ENCODE measurements at regions of chr2 and their contacts with region 1.

Region 1: DNA sequence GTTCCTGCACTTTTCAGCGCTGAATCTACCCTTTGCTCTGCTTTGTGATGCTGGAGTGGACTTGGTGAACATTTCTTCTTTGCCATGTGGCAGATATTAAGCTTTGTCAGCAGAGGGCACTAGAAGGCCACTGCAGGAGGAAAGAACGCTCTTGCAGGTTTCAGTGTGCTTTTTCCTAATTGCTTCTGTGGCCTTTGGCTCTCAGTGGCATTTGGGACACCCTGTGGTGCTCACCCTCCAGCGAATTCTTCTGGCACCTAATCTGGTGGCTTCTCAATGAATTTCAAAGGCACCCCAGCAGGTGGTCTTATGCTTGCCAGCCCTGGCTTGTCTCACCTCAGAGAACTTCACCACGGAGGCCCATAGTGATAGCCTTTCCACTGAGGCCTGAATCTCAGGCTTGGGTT is 146.7 kb downstream of the MYO3B start:
- DNase-seq: peak; percentile 42
- ATAC-seq: peak; percentile 80
- H3K4me3 ChIP-seq: no peak overlapping the region
- H3K27ac ChIP-seq: no peak overlapping the region
- H3K4me1 ChIP-seq: no peaks in the 10 kb centered on the region
- H3K27me3 ChIP-seq: no peaks in the 10 kb centered on the region
- CTCF ChIP-seq: peak; percentile 80 to 84 (median 84)
- POLR2A ChIP-seq: no peak
- RAD21 ChIP-seq: peak; percentile 87

Region 2: GRCh38 chr2:170361090-170361936 is 36.7 kb after region 1 on chr2:
- CTCF ChIA-PET with region 1: interaction called, 12 read pairs
- POLR2A ChIA-PET with region 1: no interaction called
- RAD21 ChIA-PET with region 1: interaction called in 1 of 2 experiments, 3 read pairs
- intact Hi-C with region 1: no loop called
- DNase-seq: peak; percentile 47
- ATAC-seq: peak; percentile 98
- H3K4me3 ChIP-seq: no peak overlapping the region
- H3K27ac ChIP-seq: no peak overlapping the region
- H3K4me1 ChIP-seq: peaks cover 0 to 6% of the 10 kb centered on the region in 2 experiments; a peak in 1 of 4 replicates
- H3K27me3 ChIP-seq: peaks cover 11% of the 10 kb centered on the region; the same call in 1 of the 2 replicates
- CTCF ChIP-seq: peak; percentile 75 to 89 (median 83)
- POLR2A ChIP-seq: no peak
- RAD21 ChIP-seq: peak; percentile 72

Region 3: DNA sequence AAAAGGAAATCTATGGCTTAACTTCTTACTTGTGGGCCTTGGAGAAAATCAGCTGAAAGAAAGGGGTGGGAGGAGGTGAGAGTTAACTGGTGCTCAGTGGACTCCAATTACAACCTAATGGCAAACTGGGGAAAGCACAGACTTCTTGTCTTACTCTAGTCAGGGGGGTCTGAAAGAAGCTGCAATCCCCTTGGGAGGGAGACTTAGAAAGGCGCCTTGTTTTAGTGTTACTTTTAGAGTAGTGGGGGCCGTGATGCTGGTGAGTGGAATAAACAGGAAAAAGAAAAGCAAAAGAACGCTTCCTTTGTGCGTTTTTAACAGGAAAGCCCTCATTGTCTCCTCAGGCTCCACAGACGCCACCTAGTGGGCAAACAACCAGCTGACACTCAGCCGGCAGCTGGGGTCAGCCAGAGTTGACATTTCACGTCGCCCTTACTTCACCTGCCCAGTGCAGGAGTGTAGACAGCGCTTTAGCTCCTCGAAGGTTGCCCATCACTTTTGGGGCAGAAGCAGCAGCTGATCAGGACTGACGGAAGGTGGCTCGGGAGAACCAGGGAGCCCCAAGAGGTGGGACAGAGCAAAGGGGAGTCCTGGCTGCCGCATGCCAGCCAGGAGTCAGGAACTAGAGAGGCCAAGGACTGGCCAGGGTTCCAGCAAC is 548.5 kb after region 1 on chr2:
- CTCF ChIA-PET with region 1: no interaction called
- POLR2A ChIA-PET with region 1: no interaction called
- RAD21 ChIA-PET with region 1: no interaction called
- intact Hi-C with region 1: loop called (anchors 5 kb)
- DNase-seq: peak; percentile 63
- ATAC-seq: peak; percentile 99
- H3K4me3 ChIP-seq: peak overlapping the region; percentile 15 to 45; a peak in 3 of 4 replicates
- H3K27ac ChIP-seq: no peak overlapping the region
- H3K4me1 ChIP-seq: peaks cover 0 to 13% of the 10 kb centered on the region in 2 experiments; a peak in 2 of 4 replicates
- H3K27me3 ChIP-seq: no peaks in the 10 kb centered on the region
- CTCF ChIP-seq: peak; percentile 71 to 97 (median 96)
- POLR2A ChIP-seq: no peak
- RAD21 ChIP-seq: peak; percentile 67